ENCODE measurements at regions of chr13 and their contacts with region 1.

Region 1: DNA sequence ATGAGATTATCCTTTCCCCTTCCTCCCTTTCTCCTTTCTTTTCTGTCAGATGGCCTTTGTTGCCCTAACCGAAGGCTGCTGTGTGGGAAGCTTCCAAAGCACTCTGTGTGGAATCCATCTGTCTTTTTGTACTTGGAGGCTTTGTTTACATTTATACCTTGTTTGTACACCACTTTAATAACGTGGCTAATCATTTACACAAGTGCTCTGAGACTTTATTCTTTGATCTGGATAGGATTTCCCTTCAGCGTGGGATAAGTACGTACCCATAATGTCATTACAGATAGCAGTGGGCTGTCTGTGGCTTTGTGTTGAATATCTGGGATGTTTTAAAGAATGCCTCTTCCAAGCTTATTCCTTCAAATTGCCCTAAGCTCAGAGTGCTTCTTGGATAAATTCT is 684.7 kb upstream of the SLITRK5 start:
- DNase-seq: no peak
- H3K4me3 ChIP-seq: no peak overlapping the region
- H3K27ac ChIP-seq: no peak overlapping the region
- H3K4me1 ChIP-seq: no peaks in the 10 kb centered on the region
- CTCF ChIP-seq: no peak

Region 2: GRCh38 chr13:86665842-86666241 is 320.6 kb before region 1 on chr13:
- CTCF ChIA-PET with region 1: no interaction called
- POLR2A ChIA-PET with region 1: no interaction called
- intact Hi-C with region 1: no loop called
- DNase-seq: no peak
- H3K4me3 ChIP-seq: no peak overlapping the region
- H3K27ac ChIP-seq: no peak overlapping the region
- H3K4me1 ChIP-seq: no peaks in the 10 kb centered on the region
- CTCF ChIP-seq: no peak

Region 3: DNA sequence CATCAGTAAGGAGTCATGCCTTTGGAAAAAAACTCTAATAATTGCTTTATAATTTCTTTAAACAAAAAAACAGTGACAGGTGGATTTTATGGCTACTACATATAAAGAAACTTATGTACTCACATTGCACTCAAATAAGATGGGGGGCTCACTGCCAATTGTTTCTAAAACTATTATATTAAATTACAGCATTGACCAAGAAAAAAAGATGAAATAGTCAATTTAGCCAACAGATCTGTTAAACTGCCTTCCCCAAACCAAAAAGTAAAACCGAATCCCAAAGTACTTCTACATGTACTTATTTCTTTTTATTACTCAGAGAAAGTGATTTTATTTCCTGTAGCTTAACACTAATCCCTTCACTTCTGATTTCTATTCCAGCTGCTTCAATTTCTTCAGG is 32.1 kb before region 1 on chr13:
- CTCF ChIA-PET with region 1: no interaction called
- POLR2A ChIA-PET with region 1: no interaction called
- intact Hi-C with region 1: loop called (anchors 1 kb)
- DNase-seq: no peak
- H3K4me3 ChIP-seq: no peak overlapping the region
- H3K27ac ChIP-seq: no peak overlapping the region
- H3K4me1 ChIP-seq: no peaks in the 10 kb centered on the region
- CTCF ChIP-seq: no peak

Measured in OCI-LY7 (cell line).